AG04449 (cell line): ENCODE measurements at regions of chr7 and their contacts with region 1.

Region 1: DNA sequence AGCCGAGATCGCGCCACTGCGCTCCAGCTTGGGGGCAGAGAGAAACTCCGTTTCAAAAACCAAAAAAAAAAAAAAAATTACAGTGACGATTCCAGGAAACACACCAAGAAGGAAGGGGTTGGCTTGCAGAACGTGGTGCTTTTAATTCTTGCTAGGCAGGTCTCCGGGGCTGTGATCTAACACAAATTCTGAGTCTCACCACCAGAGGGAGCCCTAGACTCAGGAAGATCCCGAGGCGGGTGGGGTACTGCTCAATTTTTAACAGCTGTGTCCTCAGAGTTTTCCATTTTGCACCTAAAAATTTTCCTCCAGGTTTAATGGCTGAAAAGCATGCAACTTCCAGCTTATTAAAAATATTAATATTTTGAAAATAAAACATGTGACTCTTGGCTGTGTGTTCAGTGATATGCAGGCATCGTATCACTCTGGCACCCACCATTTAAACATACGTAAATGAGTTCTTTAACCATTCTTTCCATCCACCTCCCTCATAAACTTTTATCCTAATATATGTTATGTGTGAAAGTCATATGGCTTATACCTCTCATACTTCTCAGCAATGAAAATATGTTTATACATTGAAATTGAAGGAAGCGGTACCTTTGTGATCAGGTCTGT is 26.5 kb upstream of the NUB1 start:
- DNase-seq: no peak
- H3K4me3 ChIP-seq: no peak overlapping the region
- CTCF ChIP-seq: peak; percentile 63

Region 2: GRCh38 chr7:151181011-151181431 is 134.1 kb before region 1 on chr7:
- CTCF ChIA-PET with region 1: no interaction called
- POLR2A ChIA-PET with region 1: no interaction called
- DNase-seq: no peak
- H3K4me3 ChIP-seq: no peak overlapping the region
- CTCF ChIP-seq: no peak

Region 3: GRCh38 chr7:151210087-151210854 is 104.9 kb before region 1 on chr7 and contains the start of gene H2BK1:
- CTCF ChIA-PET with region 1: no interaction called
- POLR2A ChIA-PET with region 1: no interaction called
- DNase-seq: no peak
- H3K4me3 ChIP-seq: no peak within 1 kb of the TSS
- CTCF ChIP-seq: no peak

Region 4: GRCh38 chr7:151304856-151305255 is 10.3 kb before region 1 on chr7:
- CTCF ChIA-PET with region 1: interaction called, 62 read pairs
- POLR2A ChIA-PET with region 1: interaction called, 3 read pairs
- DNase-seq: no peak
- H3K4me3 ChIP-seq: peak overlapping the region; percentile 29; the same call in 1 of the 2 replicates
- CTCF ChIP-seq: no peak

Region 5: GRCh38 chr7:151334628-151335027 is 19.5 kb after region 1 on chr7:
- CTCF ChIA-PET with region 1: interaction called, 20 read pairs
- POLR2A ChIA-PET with region 1: no interaction called
- DNase-seq: no peak
- H3K4me3 ChIP-seq: no peak overlapping the region
- CTCF ChIP-seq: no peak

Region 6: GRCh38 chr7:151351027-151351426 is 35.9 kb after region 1 on chr7:
- CTCF ChIA-PET with region 1: interaction called, 191 read pairs
- POLR2A ChIA-PET with region 1: no interaction called
- DNase-seq: no peak
- H3K4me3 ChIP-seq: no peak overlapping the region
- CTCF ChIP-seq: peak; percentile 1

Region 7: DNA sequence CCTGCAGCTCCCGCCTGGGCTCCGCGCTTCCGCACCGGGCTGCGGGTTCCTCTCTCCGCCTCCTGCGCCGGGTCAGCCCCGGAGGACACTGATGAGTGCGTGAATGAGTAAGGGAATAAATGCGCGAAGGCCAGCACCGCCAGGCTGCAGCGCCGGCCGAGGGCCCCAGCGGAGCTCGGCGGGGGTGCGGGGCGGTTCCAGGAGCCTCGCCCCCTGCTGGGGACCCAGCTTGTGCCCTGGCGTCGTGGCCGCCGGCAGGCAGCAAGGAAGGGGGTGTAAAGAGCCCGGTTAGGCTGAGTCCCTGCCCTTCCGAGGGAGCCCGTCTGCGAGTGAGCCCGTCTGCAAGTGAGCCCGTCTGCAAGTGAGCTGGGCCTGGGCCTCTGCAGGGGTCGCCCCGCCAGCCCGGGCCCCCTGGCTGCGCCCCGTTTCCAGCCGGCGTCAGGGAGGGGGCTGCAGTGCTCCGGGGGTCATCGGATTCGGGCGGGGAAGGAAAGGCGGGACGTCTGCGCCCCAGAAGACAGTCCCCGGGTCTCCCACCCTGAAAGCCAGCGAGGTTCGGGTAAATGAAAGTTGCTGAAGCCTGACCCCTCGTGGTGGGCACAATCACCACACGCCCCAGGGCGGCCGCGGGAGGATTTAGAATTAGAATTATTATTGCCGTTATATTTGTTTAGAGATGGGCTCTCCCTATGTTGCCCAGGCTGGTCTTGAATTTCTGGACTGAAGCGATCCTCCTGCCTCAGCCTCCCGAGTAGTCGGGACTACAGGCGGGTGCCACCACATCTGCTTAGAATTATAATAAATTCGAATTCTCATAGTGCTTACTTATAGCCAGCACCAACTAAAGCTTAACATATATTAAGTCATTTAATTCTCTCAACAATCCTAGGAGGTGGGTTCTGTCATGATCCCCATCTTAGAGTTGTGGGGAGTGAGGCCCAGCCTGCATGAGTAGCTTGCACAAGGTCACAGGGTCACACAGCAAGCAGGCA is 133.4 kb after region 1 on chr7:
- CTCF ChIA-PET with region 1: interaction called, 124 read pairs
- POLR2A ChIA-PET with region 1: no interaction called
- DNase-seq: no peak
- H3K4me3 ChIP-seq: peak overlapping the region; percentile 54
- CTCF ChIP-seq: peak; percentile 82

Region 8: GRCh38 chr7:151782598-151783448 is 467.7 kb after region 1 on chr7:
- CTCF ChIA-PET with region 1: interaction called, 17 read pairs
- POLR2A ChIA-PET with region 1: no interaction called
- DNase-seq: no peak
- H3K4me3 ChIP-seq: peak overlapping the region; percentile 42
- CTCF ChIP-seq: peak; percentile 90